Head of caudate nucleus (tissue), 42 donors: ENCODE measurements at regions of chr20 and their contacts with region 1.

Region 1: GRCh38 chr20:3000852-3001523 is 42.4 kb upstream of the GNRH2 start:
- DNase-seq: peak in 17 of 42 donors; percentile 3 to 70 (median 19)

Region 2: DNA sequence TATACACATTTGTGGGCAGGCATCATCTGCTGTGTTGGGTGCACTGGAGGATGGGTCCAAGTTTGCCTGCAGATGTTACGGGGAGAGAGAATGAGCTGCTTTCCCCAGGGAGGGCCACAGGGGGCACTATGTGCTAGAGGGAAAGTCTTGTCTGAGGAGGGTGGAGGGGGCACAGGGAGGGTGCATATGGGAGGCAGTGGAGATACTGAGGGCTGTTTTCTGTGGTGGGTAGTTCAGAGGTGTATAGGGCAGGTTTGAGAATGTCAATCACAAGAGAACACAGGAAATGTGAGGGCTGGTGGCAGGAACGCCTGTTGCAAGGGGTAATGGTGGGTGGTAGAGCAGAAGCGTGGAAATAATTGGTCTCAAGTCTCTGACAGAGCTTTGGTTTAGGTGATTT is 135.4 kb before region 1 on chr20:
- intact Hi-C with region 1: loop called (anchors 10 kb)
- DNase-seq: peak in 16 of 42 donors; percentile 13 to 63 (median 48)

Region 3: GRCh38 chr20:3768342-3769130 is 767.5 kb after region 1 on chr20:
- intact Hi-C with region 1: no loop called
- DNase-seq: peak; percentile 77 to 96 (median 90)